Heart right ventricle (tissue), 16 donors: ENCODE measurements at regions of chr7 and their contacts with region 1.

Region 1: GRCh38 chr7:38932509-38933168 is 23.6 kb upstream of the VPS41 start:
- DNase-seq: peak; percentile 39 to 63
- ATAC-seq: no peak
- H3K4me3 ChIP-seq: no peak overlapping the region
- H3K27ac ChIP-seq: no peak overlapping the region
- H3K4me1 ChIP-seq: peaks cover 0 to 11% (median 0%) of the 10 kb centered on the region in 9 donors
- H3K27me3 ChIP-seq: peaks cover 0 to 4% (median 0%) of the 10 kb centered on the region in 7 donors
- CTCF ChIP-seq: peak; percentile 38 to 85 (median 79)

Region 2: DNA sequence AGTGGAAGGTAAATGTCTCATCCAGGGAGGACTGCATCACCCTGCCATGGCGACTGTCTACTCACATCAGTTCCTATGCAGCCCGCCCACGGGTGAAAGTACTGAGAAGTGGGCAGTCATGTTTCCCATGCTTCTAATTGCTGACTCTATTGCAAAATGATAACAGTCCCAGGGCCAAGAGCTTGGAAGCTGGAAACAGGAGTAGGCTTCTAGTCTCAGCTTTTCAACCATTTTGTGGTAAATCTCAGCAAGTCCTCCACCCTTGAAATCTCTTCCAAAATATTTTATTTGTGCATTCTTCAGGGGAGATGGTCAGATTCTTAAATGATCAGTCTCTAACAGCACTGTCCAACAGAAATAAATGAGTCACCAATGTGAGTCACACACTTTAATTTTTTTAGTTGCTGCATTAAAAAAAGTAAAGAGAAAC is 611.1 kb before region 1 on chr7:
- intact Hi-C with region 1: no loop called
- DNase-seq: no peak
- ATAC-seq: no peak
- H3K4me3 ChIP-seq: no peak overlapping the region
- H3K27ac ChIP-seq: no peak overlapping the region
- H3K4me1 ChIP-seq: peaks cover 0 to 23% (median 0%) of the 10 kb centered on the region in 9 donors
- H3K27me3 ChIP-seq: peaks cover 0 to 6% (median 0%) of the 10 kb centered on the region in 7 donors
- CTCF ChIP-seq: no peak

Region 3: DNA sequence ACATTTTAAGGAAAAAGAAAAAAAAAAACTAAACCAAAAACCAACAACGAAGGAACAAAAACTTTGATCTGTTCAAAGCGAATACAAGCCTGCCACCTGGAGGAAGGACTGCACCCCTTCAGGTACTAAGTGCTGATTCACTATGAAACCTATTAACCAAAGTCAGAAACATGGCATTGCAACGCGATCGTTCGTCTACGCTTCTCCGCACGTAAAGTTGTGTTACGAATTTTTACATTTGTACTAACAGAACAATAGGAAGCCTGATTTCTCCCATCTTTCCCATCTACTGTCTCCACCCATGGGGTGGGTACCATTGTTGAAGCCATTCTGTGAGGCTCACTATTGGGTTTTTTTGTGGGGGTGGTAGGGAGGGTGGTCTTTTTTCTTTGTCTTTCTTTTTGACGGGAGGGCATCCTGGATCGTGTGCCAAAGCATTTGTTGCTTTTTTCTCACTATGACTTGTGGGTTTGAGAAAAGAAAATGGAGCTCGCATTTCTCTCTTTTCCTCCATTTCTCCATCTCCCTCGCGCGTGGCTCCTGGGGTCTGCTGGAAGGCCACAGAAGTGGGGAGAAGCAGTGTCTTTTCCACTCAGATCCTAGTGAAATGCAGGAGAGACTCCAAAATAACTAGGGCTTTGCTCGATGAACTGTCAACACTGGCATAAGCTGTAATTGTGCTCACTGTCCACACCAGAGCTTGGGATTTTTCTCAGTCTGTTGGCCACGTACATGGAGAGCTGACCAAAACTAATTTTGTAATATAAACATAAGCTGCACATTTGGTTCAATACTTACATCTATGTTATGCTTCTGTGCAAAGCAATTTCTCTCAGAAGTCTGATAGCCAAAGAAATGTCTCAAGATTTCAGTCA is 532.7 kb after region 1 on chr7:
- intact Hi-C with region 1: loop called in 8 of 10 experiments (anchors 1 to 10 kb)
- DNase-seq: peak in 1 of 2 donors; percentile 21
- ATAC-seq: peak in 5 of 8 donors; percentile 55 to 77 (median 68)
- H3K4me3 ChIP-seq: peak overlapping the region in 1 of 10 donors; percentile 6
- H3K27ac ChIP-seq: no peak overlapping the region
- H3K4me1 ChIP-seq: peaks cover 0 to 6% (median 0%) of the 10 kb centered on the region in 9 donors
- H3K27me3 ChIP-seq: peaks cover 0 to 20% (median 3%) of the 10 kb centered on the region in 7 donors
- CTCF ChIP-seq: peak; percentile 51 to 81 (median 65)

Region 4: DNA sequence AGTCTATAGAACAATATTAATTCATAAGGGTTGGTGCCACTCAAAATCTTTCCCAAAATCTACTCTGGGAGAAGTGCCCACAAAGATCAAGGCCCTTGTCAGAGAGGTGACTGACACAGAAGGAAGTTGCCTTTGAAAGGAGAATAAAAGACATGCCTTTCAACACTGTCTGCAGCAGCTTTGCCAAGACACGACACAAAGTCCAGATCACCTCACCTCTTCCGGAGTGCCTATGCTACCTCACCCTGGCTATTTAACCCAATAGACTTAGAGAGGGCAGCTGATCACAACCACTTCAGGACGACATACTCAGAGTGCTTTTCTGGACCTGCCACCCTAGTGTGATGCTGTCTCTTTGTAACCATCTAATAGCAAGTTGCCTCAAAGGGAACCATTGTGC is 584.6 kb after region 1 on chr7:
- intact Hi-C with region 1: loop called in 3 of 10 experiments (anchors 5 to 10 kb)
- DNase-seq: no peak
- ATAC-seq: no peak
- H3K4me3 ChIP-seq: no peak overlapping the region
- H3K27ac ChIP-seq: no peak overlapping the region
- H3K4me1 ChIP-seq: peaks cover 0 to 4% (median 0%) of the 10 kb centered on the region in 9 donors
- H3K27me3 ChIP-seq: peaks cover 0 to 8% (median 0%) of the 10 kb centered on the region in 7 donors
- CTCF ChIP-seq: no peak

Region 5: DNA sequence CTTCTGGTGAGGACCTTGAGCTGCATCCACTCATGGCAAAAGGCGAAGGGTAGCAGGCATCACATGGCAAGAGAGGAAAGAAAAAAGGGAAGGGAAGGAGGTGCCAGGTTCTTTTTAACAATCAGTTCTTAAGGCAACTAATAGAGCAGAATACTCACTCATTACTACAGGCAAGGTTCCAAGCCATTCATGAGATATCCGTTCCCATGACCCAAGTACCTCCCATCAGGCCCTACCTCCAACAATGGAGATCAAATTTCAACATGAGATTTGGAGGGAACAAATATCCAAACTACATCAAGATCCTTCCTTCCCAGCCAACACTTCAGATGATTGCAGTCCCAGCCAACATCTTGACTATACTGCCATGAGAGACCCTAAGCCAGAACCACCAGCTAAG is 594.7 kb after region 1 on chr7:
- intact Hi-C with region 1: loop called in 1 of 10 experiments (anchors 10 kb)
- DNase-seq: no peak
- ATAC-seq: no peak
- H3K4me3 ChIP-seq: no peak overlapping the region
- H3K27ac ChIP-seq: no peak overlapping the region
- H3K4me1 ChIP-seq: no peaks in the 10 kb centered on the region
- H3K27me3 ChIP-seq: peaks cover 0 to 7% (median 0%) of the 10 kb centered on the region in 7 donors
- CTCF ChIP-seq: no peak